Posterior cingulate gyrus (tissue), 11 donors: ENCODE measurements at regions of chr5 and their contacts with region 1.

Region 1: DNA sequence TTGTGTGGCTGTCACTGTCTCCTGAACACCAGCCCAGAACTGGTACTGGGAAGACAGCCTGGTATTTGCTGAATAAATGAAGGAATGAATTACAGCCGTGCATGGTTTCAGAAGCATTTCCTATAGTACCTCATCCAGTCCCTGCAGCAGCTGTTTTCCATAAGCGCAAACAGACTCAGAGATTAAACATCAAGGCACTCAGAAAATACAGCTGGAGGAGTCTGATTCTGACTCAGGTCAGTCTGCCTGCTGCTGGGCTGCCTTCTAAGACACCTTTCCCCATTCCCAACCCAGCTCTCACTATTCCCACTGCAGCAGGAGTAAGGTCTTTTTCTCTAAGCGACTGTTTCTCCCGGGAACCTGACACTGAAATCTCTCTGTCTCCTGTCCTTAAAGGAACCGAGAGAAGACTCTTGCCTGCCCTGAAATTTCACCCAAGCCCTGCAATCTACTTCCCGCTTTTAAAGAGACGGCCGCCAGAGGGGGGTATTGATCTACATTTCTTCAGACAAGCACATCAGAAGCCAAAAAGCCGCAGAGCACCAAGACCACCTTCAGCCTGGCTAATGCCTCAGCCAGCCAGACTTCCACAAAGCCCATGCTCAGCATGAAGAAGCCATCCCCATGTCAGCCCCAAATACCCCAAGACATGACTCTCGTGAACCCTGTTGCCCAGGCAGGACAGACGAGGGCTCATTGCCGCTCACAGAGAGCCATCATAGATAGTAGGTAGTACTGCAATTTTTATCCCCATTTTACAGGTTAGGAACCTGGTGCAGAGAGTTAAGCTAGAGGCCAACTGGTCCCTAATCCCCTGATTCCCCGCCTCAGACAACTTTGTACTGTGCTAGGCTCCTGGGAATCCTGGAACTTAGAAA is 5.4 kb upstream of the FOXI1 start:
- DNase-seq: peak in 9 of 10 donors; percentile 49 to 95 (median 80)

Region 2: GRCh38 chr5:170183816-170184687 is 83.7 kb after region 1 on chr5:
- intact Hi-C with region 1: loop called (anchors 1 kb)
- DNase-seq: peak; percentile 39 to 95 (median 69)

Region 3: GRCh38 chr5:170216266-170216864 is 116.1 kb after region 1 on chr5:
- intact Hi-C with region 1: loop called (anchors 1 kb)
- DNase-seq: peak in 3 of 10 donors; percentile 22 to 82 (median 28)

Region 4: DNA sequence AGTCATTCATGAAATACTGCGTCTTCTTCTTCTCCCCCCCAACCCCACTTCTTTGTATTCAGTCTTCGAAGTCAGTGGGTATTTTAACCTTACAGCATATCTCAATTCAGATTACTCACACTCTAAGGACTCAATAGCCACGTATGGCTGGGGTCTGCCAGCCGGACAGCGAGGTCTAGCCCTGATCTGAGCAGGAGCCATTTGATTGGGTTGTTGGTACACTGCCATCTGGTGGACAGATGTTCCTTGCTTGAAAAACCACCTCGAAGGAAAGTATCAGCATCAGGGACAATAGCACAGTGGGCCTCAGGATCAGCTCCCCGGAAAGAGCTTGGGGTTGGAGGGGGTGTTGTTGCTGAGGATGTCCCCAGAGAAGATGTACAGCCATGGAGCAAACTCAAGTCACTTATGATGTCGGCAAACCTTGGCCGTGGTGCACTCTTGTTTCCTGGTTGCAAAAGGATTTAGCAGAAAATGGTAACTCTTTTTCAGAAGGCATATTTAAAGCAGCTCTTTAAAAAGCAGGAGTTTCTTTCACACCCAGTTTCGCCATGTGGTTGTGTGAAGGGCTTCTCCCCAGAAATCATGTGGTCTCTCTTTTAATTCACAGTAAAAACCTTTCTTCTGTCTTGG is 320.6 kb after region 1 on chr5:
- intact Hi-C with region 1: loop called (anchors 10 kb)
- DNase-seq: peak in 4 of 10 donors; percentile 47 to 64 (median 52)

Region 5: DNA sequence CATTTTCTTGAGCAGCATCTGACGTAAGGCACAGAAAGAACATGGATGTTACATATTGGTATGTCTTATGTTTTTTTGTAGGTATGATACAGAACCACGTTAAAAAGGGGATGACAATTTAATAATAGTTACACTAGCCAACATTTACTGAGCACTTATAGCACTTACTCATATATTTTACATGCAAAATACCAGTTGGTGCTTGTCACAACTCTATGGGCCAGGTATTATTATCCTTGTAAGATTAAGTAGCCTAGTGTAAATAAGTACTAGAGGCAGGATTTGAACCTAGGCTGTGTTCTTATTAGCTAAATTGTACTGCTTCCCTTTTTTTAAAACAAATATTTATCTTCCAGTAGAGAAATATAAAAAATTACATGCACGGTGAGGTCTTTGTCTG is 845.0 kb after region 1 on chr5:
- intact Hi-C with region 1: no loop called
- DNase-seq: no peak